ENCODE measurements at regions of chr19 and their contacts with region 1.

Region 1: DNA sequence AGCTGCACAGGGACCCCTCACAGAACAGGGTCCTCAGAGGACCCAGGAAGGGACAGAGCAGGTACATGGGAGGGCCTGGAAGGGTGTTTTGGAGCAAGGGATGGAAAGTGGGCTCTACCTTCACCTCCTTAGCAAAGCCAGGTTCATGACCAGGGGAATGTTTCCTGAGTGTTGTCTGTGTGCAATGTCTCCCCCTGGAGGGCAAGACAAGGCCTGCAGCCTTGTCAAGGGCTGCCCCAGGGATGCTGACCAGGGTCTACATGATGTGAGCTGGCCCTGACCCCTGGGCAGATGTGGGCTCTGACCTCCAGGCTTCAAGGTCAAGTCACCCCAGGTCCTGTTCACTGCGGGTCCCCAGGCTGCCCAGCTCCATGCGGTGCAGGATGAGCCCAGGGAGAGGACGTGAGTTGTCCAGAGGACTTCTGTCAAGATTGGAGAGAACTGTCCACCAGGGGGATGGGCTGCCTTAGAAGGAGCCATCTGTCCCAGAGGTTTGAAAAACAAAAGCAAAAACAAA is 1.0 kb upstream of the CEACAM1 start:
- DNase-seq: peak; percentile 85
- H3K4me3 Mint-ChIP-seq: peak overlapping the region; percentile 75
- H3K27ac Mint-ChIP-seq: peak overlapping the region; percentile 82
- H3K4me1 Mint-ChIP-seq: peaks cover 25% of the 10 kb centered on the region
- H3K27me3 Mint-ChIP-seq: no peaks in the 10 kb centered on the region

Region 2: DNA sequence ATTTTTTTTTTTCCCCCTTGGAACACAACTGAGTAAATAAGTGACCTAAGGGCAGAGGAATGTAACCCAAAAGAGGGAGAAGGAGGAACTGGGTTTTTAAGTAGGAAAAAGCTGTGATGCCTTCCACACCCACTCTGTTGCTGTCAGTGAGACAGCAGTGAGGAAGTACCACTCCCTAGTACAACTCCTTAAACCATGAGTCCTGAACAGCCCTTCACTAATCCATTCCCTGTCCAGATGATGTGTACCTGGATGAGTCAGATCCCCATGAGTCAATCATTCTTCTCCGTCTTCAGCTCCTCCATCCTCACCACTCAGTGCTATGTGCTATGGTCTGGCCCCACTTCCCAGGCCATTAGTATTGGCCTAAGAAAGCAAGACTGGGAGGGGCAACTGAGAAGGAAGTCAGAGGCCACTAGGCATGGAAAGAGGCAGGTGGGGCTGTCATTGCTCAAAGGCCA is 73.7 kb before region 1 on chr19:
- CTCF ChIA-PET with region 1: interaction called, 123 read pairs
- intact Hi-C with region 1: loop called (anchors 1 kb)
- DNase-seq: no peak
- H3K4me3 Mint-ChIP-seq: no peak overlapping the region
- H3K27ac Mint-ChIP-seq: no peak overlapping the region
- H3K4me1 Mint-ChIP-seq: no peaks in the 10 kb centered on the region
- H3K27me3 Mint-ChIP-seq: no peaks in the 10 kb centered on the region

Region 3: GRCh38 chr19:42563352-42564210 is 34.3 kb after region 1 on chr19:
- CTCF ChIA-PET with region 1: no interaction called
- intact Hi-C with region 1: no loop called
- DNase-seq: peak; percentile 34
- H3K4me3 Mint-ChIP-seq: no peak overlapping the region
- H3K27ac Mint-ChIP-seq: no peak overlapping the region
- H3K4me1 Mint-ChIP-seq: no peaks in the 10 kb centered on the region
- H3K27me3 Mint-ChIP-seq: peaks cover 5% of the 10 kb centered on the region

Measured in activated naive CD4-positive, alpha-beta T cell treated with anti-CD3 and anti-CD28 coated beads for 36 hours (primary cell).